ENCODE measurements at regions of chr20 and their contacts with region 1.

Region 1: DNA sequence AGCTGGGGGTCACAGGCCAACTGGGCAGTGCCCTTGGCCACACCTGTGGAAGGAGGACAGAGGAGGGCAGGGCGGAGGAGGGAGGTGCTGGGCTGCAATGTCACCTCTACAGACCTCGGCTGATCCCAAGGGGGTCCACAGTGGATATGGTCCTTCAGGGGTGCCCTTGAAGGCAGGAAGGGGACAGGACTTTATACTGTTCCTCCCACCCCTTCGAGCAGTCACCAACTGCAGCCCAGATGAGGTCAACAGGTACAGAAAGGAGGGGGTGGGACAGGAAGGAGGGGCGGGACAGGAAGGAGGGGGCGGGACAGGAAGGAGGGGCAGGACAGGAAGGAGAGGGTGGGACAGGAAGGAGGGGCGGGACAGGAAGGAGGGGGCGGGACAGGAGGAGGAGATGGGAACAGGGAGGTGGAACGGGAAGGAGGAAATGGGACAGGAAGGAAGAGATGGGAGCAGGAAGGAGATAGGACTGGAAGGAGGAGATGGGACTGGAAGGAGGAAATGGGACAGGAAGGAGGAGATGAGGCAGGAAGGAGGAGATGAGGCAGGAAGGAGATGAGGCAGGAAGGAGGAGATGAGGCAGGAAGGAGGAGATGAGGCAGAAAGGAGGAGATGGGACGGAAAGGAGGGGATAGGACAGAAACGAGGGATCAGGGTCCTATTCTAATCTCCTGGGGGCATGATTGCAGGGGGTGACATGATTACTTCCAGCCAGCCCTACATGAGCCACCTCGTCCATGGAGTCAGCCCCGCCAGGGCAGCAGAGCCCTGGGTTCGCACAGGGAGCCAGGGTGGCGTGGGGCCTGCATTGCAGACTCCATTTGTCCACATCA is 19.4 kb upstream of the MRGBP start:
- DNase-seq: peak; percentile 89
- H3K4me3 Mint-ChIP-seq: peak overlapping the region; percentile 67
- H3K27ac Mint-ChIP-seq: peak overlapping the region; percentile 92
- H3K4me1 Mint-ChIP-seq: peaks cover 53% of the 10 kb centered on the region
- H3K27me3 Mint-ChIP-seq: no peaks in the 10 kb centered on the region

Region 2: DNA sequence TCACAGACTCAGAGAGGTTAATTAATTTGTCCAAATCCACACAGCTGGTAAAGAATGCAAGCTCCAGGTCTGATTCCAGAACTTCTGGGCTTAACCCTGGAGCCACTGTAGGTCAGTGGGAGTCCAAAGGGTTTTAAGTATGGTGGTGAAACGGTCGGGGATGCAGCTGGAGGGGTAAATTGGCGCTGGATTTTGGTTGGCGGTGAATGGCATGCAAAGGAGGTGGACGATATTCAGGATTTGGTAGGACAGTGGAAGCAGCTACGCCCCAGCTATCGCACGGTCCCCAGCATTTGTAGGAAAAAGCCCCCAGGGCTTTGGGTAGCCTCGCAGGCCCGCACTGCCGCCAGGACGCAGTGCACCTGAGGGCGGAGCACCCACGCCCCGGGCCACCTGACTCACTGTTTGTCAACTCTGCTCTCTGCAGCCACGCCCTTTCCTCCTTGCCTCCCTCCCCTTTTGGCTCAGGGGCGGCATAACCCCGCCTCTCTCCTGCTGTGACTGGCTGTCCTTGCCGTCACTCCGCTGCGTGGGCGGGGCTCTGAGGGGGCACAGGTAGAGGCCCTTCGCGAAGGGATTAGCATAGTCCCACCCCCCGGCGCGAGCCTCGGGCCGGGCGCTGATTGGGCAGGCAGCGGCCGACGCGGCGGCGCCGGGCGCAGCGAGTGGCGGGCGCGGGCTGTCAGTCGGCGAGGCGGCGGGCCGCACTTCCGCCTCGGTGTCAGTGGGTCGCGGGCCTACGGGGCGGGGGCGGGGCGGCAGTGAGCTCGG is 538.9 kb before region 1 on chr20 and contains the start of gene OSBPL2:
- CTCF ChIA-PET with region 1: no interaction called
- intact Hi-C with region 1: loop called (anchors 5 kb)
- DNase-seq: peak; percentile 100
- H3K4me3 Mint-ChIP-seq: peak within 1 kb of the TSS; percentile 78
- H3K27ac Mint-ChIP-seq: peak within 1 kb of the TSS; percentile 79
- H3K4me1 Mint-ChIP-seq: peaks cover 28% of the 10 kb centered on the region
- H3K27me3 Mint-ChIP-seq: no peaks in the 10 kb centered on the region
- total RNA-seq, gene OSBPL2: 23.6 to 24.7 TPM

Region 3: GRCh38 chr20:62476056-62476838 is 300.7 kb before region 1 on chr20:
- CTCF ChIA-PET with region 1: no interaction called
- intact Hi-C with region 1: no loop called
- DNase-seq: no peak
- H3K4me3 Mint-ChIP-seq: no peak overlapping the region
- H3K27ac Mint-ChIP-seq: no peak overlapping the region
- H3K4me1 Mint-ChIP-seq: peaks cover 2% of the 10 kb centered on the region
- H3K27me3 Mint-ChIP-seq: peaks cover 44% of the 10 kb centered on the region

Region 4: DNA sequence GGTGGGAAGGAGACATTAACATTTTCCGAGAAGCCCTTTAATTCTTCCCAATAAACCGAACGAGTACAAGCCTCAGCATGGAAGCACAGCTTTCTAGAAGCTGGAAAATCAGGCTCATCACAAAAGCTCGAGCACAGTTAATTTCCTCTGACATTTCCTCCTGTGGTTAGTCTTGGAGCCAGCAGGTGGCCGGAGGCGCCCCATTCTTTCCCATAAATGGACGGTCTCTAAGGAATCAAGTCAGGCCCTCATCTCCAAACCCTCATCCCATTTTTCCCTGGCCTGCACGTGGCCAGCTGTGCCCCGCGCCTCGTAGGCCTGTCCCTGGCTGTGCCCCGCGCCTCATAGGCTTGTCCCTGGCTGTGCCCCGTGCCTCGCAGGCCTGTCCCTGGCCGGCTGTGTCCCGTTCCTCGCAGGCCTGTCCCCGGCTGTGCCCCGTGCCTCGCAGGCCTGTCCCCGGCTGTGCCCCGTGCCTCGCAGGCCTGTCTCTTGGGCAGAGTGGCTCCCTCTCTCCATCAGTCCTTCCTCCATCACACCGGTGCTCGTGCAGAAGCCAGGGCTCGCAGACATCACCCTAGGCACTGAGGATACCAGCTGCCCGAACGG is 88.0 kb before region 1 on chr20:
- CTCF ChIA-PET with region 1: no interaction called
- intact Hi-C with region 1: no loop called
- DNase-seq: no peak
- H3K4me3 Mint-ChIP-seq: no peak overlapping the region
- H3K27ac Mint-ChIP-seq: no peak overlapping the region
- H3K4me1 Mint-ChIP-seq: peaks cover 8% of the 10 kb centered on the region
- H3K27me3 Mint-ChIP-seq: peaks cover 7% of the 10 kb centered on the region

Region 5: GRCh38 chr20:62740286-62741141 is 36.4 kb before region 1 on chr20:
- CTCF ChIA-PET with region 1: no interaction called
- intact Hi-C with region 1: loop called (anchors 1 kb)
- DNase-seq: peak; percentile 86
- H3K4me3 Mint-ChIP-seq: peak overlapping the region; percentile 38
- H3K27ac Mint-ChIP-seq: peak overlapping the region; percentile 47
- H3K4me1 Mint-ChIP-seq: peaks cover 28% of the 10 kb centered on the region
- H3K27me3 Mint-ChIP-seq: no peaks in the 10 kb centered on the region

Measured in activated naive CD4-positive, alpha-beta T cell treated with anti-CD3 and anti-CD28 coated beads for 36 hours (primary cell).